Posterior cingulate gyrus (tissue), 11 donors: ENCODE measurements at regions of chr9 and their contacts with region 1.

Region 1: DNA sequence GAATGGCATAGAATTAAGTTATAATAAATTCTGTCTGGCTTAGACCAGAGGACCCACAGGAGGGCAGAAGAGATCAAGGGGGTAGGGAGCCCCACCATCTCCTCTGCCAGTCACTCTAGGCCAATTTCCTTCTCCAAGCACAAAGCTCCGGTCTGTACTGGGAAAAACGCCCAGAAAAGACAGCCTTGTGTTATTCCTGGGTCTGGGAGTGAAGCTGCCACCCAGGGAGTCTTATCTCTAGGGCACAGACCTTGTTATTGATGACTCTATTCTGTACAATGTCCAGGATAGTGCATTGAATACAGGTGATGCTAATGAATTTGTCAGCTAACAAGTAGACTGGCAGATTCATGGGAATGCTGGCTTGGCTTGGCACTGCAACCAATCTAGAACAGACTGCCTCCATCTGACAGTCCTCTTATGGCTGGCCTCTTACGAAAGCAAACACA is 60.7 kb downstream of the MED27 start:
- DNase-seq: peak in 5 of 10 donors; percentile 19 to 88 (median 41)

Region 2: GRCh38 chr9:131517761-131518190 is 501.2 kb before region 1 on chr9:
- intact Hi-C with region 1: no loop called
- DNase-seq: peak in 3 of 10 donors; percentile 15 to 45 (median 28)

Region 3: GRCh38 chr9:132160802-132161742 is 142.1 kb after region 1 on chr9:
- intact Hi-C with region 1: loop called (anchors 5 kb)
- DNase-seq: peak in 2 of 10 donors; percentile 38 to 87